GM12878 (cell line): ENCODE measurements at regions of chr4 and their contacts with region 1.

Region 1: DNA sequence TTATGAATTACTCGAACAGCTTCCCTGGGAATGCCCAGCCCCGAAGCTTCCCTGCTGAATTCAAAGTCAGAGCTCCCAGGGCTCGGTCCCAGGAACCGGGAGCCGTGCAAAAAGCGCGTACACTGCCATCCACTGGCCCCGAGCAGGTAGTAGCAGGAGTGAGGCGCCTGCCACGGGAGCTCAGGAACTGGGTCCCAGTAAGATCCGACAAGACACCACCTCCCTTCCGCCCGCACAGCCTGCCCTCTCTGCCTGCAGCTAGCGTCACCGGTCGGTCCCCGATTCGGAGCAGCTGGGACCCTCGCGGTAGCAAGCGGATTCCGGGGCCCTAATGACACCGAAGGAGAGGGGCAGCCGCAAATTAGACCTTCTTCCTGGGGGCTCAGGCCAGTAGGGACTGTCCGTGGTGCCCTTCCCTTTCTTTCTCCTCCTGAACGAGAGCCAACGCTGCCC is 1.2 kb downstream of the CORIN start:
- DNase-seq: no peak
- ATAC-seq: peak; percentile 86
- H3K4me3 ChIP-seq: peak overlapping the region; percentile 74
- H3K27ac ChIP-seq: no peak overlapping the region
- H3K4me1 ChIP-seq: peaks cover 27% of the 10 kb centered on the region
- H3K27me3 ChIP-seq: no peaks in the 10 kb centered on the region
- CTCF ChIP-seq: peak; percentile 67 to 77 (median 71)
- EP300 ChIP-seq: no peak
- POLR2A ChIP-seq: no peak
- RAD21 ChIP-seq: peak; percentile 70

Region 2: GRCh38 chr4:47668810-47669408 is 167.8 kb before region 1 on chr4:
- CTCF ChIA-PET with region 1: interaction called, 20 read pairs
- POLR2A ChIA-PET with region 1: no interaction called
- RAD21 ChIA-PET with region 1: interaction called, 9 read pairs
- SMC1A ChIA-PET with region 1: interaction called, 6 read pairs
- in situ Hi-C with region 1: no loop called
- intact Hi-C with region 1: no loop called
- DNase-seq: no peak
- ATAC-seq: peak; percentile 90
- H3K4me3 ChIP-seq: no peak overlapping the region
- H3K27ac ChIP-seq: no peak overlapping the region
- H3K4me1 ChIP-seq: no peaks in the 10 kb centered on the region
- H3K27me3 ChIP-seq: no peaks in the 10 kb centered on the region; a peak in 1 of 4 replicates
- CTCF ChIP-seq: peak; percentile 62 to 78 (median 63); a peak in 5 of 6 replicates
- EP300 ChIP-seq: no peak
- POLR2A ChIP-seq: no peak
- RAD21 ChIP-seq: peak; percentile 64

Region 3: GRCh38 chr4:47692639-47693180 is 144.0 kb before region 1 on chr4:
- CTCF ChIA-PET with region 1: interaction called, 46 read pairs
- POLR2A ChIA-PET with region 1: no interaction called
- RAD21 ChIA-PET with region 1: interaction called, 9 read pairs
- SMC1A ChIA-PET with region 1: interaction called, 17 read pairs
- in situ Hi-C with region 1: loop called (anchors 5 kb)
- intact Hi-C with region 1: no loop called
- DNase-seq: no peak
- ATAC-seq: no peak
- H3K4me3 ChIP-seq: no peak overlapping the region
- H3K27ac ChIP-seq: no peak overlapping the region
- H3K4me1 ChIP-seq: no peaks in the 10 kb centered on the region
- H3K27me3 ChIP-seq: no peaks in the 10 kb centered on the region; a peak in 1 of 4 replicates
- CTCF ChIP-seq: no peak
- EP300 ChIP-seq: no peak
- POLR2A ChIP-seq: no peak
- RAD21 ChIP-seq: no peak

Region 4: DNA sequence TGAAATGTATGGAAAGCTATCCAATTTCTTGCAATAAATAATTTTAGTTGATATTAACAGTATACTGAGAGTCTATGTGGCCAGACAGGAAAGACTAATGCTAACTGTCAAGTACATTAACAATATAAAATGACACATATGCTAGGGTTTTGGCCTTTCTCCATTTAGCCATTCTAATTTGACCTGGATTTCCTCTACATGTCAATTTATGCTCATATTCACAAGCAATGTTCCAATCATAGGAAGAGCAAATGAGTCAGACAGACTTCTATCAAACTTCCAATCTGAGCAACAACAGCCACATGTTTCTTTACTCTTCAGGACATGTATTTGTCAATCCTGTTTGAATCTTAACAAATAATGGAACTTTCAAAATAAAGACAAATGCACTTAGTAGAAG is 52.4 kb before region 1 on chr4:
- CTCF ChIA-PET with region 1: interaction called, 11 read pairs
- POLR2A ChIA-PET with region 1: no interaction called
- RAD21 ChIA-PET with region 1: interaction called, 3 read pairs
- SMC1A ChIA-PET with region 1: interaction called, 3 read pairs
- in situ Hi-C with region 1: no loop called
- intact Hi-C with region 1: no loop called
- DNase-seq: no peak
- ATAC-seq: no peak
- H3K4me3 ChIP-seq: no peak overlapping the region
- H3K27ac ChIP-seq: no peak overlapping the region
- H3K4me1 ChIP-seq: peaks cover 4% of the 10 kb centered on the region; the same call in 1 of the 2 replicates
- H3K27me3 ChIP-seq: no peaks in the 10 kb centered on the region
- CTCF ChIP-seq: no peak
- EP300 ChIP-seq: no peak
- POLR2A ChIP-seq: no peak
- RAD21 ChIP-seq: no peak

Region 5: GRCh38 chr4:47824840-47825239 is 11.8 kb before region 1 on chr4:
- CTCF ChIA-PET with region 1: interaction called, 15 read pairs
- POLR2A ChIA-PET with region 1: no interaction called
- RAD21 ChIA-PET with region 1: interaction called, 10 read pairs
- SMC1A ChIA-PET with region 1: interaction called, 5 read pairs
- in situ Hi-C with region 1: no loop called
- intact Hi-C with region 1: no loop called
- DNase-seq: no peak
- ATAC-seq: peak; percentile 85
- H3K4me3 ChIP-seq: no peak overlapping the region
- H3K27ac ChIP-seq: no peak overlapping the region
- H3K4me1 ChIP-seq: peaks cover 9% of the 10 kb centered on the region
- H3K27me3 ChIP-seq: no peaks in the 10 kb centered on the region
- CTCF ChIP-seq: no peak
- EP300 ChIP-seq: no peak
- POLR2A ChIP-seq: no peak
- RAD21 ChIP-seq: no peak

Region 6: DNA sequence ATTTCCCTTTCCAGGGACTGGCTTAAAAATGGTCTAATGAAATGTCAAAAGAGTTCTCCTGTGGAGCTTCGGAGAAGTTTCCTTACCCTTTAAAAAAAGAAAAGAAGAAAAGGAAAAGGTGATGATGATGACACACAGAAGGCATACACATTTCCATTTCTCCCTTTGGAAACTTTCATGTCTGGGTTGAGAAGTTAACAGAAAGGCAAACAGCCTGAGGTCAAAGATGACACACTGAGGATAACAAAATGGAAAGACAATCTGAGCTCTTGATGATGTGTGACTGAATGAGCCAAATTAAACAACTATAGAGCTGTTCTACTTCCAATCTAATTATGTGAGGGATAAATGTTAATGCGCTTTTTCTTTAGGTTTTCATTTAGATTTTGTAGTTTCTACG is 45.6 kb after region 1 on chr4:
- CTCF ChIA-PET with region 1: interaction called, 10 read pairs
- POLR2A ChIA-PET with region 1: no interaction called
- RAD21 ChIA-PET with region 1: interaction called, 3 read pairs
- SMC1A ChIA-PET with region 1: interaction called, 4 read pairs
- in situ Hi-C with region 1: no loop called
- intact Hi-C with region 1: no loop called
- DNase-seq: no peak
- ATAC-seq: no peak
- H3K4me3 ChIP-seq: no peak overlapping the region
- H3K27ac ChIP-seq: no peak overlapping the region
- H3K4me1 ChIP-seq: no peaks in the 10 kb centered on the region
- H3K27me3 ChIP-seq: no peaks in the 10 kb centered on the region
- CTCF ChIP-seq: no peak
- EP300 ChIP-seq: no peak
- POLR2A ChIP-seq: no peak
- RAD21 ChIP-seq: no peak